ENCODE measurements at regions of chr15 and their contacts with region 1.

Region 1: DNA sequence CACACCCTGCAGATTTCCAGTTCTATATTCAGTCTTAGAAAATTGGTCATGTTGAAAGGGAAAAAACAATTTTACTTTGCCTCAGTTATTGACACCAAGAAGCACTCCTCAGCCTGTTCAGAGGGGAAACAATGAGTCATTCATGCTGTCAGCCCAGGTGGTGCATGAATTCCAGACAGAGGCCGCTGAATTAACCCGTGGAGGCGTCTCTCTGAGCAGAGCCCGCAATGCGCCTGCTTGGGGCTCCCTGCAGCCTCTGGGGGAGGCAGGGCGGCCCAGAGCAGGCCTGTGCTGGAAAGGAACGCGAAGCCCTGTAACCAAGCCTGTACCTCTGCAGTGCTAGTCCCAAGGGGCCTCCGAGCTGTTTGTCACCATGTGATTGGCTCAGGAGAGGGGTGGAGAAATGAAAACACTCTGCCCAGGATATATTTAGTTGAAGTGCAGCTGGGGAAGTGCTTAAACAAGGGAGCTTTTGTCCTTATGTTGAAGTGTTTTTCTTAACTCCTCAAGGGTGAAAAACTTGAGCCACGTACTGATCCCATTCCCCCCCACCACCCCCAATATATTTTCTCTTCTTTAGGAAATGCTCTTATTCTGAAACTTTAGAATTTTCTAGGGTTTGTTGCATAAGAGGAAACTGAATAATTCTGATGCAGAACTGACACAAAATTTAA is 68.3 kb upstream of the CHD2 start:
- DNase-seq: peak; percentile 86
- ATAC-seq: peak; percentile 93
- H3K4me3 Mint-ChIP-seq: peak overlapping the region; percentile 80
- H3K27ac Mint-ChIP-seq: peak overlapping the region; percentile 96
- H3K4me1 Mint-ChIP-seq: peaks cover 58% of the 10 kb centered on the region
- H3K27me3 Mint-ChIP-seq: no peaks in the 10 kb centered on the region
- CTCF ChIP-seq: no peak

Region 2: DNA sequence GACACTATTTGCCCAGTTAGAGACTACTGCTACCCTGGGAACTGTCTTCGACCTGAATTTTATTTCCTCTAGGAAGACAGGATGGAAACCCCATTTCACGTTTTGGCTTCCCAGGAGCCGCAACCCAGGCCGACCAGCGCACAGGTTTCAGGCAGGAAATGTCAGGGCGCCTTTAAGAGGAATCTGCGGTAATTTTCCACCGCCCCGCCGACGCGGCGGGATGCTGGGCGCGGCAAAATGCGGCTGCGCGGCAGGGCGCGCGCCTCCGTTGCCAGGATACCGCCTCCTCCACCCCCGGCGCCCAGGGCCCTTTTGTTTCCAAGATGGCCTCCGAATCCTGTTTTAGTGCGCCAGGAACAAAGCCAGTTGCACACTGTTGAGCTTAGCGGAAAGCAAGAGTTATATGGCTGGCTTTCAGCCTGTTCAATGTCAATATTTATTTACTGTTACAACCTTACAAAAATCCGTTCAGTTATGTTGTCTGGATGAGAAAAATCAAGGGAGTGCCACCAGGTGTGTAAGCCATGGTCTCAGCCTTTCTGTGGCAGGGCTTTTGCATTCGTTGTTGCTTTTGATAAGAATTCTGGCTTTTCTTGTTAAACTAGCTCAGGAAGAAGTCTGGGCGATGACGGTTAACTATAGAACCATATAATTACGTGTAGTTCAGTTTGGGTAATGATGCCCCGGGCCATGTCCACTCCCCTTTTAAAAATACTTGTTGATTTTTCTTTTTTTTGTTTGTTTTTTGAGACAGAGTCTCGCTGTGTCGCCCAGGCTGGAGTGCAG is 11.4 kb before region 1 on chr15:
- CTCF ChIA-PET with region 1: no interaction called
- POLR2A ChIA-PET with region 1: interaction called, 90 read pairs
- intact Hi-C with region 1: loop called (anchors 1 kb)
- DNase-seq: peak; percentile 82
- ATAC-seq: peak; percentile 79
- H3K4me3 Mint-ChIP-seq: peak overlapping the region; percentile 90
- H3K27ac Mint-ChIP-seq: peak overlapping the region; percentile 90
- H3K4me1 Mint-ChIP-seq: peaks cover 62% of the 10 kb centered on the region
- H3K27me3 Mint-ChIP-seq: no peaks in the 10 kb centered on the region
- CTCF ChIP-seq: no peak

Region 3: GRCh38 chr15:92845126-92845508 is 13.3 kb after region 1 on chr15:
- CTCF ChIA-PET with region 1: interaction called, 4 read pairs
- POLR2A ChIA-PET with region 1: interaction called, 102 read pairs
- intact Hi-C with region 1: loop called (anchors 1 kb)
- DNase-seq: no peak
- ATAC-seq: peak; percentile 50
- H3K4me3 Mint-ChIP-seq: peak overlapping the region; percentile 73
- H3K27ac Mint-ChIP-seq: peak overlapping the region; percentile 95
- H3K4me1 Mint-ChIP-seq: peaks cover 71% of the 10 kb centered on the region
- H3K27me3 Mint-ChIP-seq: no peaks in the 10 kb centered on the region
- CTCF ChIP-seq: no peak

Region 4: GRCh38 chr15:92889390-92890107 is 57.8 kb after region 1 on chr15:
- CTCF ChIA-PET with region 1: interaction called, 3 read pairs
- POLR2A ChIA-PET with region 1: interaction called, 416 read pairs
- intact Hi-C with region 1: no loop called
- DNase-seq: no peak
- ATAC-seq: no peak
- H3K4me3 Mint-ChIP-seq: peak overlapping the region; percentile 13
- H3K27ac Mint-ChIP-seq: peak overlapping the region; percentile 59
- H3K4me1 Mint-ChIP-seq: peaks cover 62% of the 10 kb centered on the region
- H3K27me3 Mint-ChIP-seq: no peaks in the 10 kb centered on the region
- CTCF ChIP-seq: no peak

Region 5: DNA sequence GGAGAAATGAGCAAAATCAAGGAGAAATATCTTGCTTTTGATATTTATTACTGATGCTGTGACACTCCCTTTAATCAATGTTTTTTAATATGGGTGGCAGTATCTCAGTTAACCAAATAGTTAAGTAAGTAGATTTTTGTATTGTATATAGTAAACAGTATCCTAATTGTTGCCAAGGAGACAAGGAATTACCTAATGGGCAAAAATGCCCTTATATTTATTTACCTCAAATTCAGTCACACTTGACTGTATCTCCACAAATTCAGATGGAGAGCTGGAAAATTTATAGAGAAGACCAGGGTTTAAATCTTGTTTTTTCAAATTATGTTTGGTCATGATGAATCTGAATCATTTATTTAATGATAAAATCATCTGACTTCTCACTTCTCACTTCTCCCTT is 64.8 kb after region 1 on chr15:
- CTCF ChIA-PET with region 1: interaction called, 4 read pairs
- POLR2A ChIA-PET with region 1: interaction called, 144 read pairs
- intact Hi-C with region 1: loop called (anchors 1 kb)
- DNase-seq: no peak
- ATAC-seq: no peak
- H3K4me3 Mint-ChIP-seq: no peak overlapping the region
- H3K27ac Mint-ChIP-seq: peak overlapping the region; percentile 79
- H3K4me1 Mint-ChIP-seq: peaks cover 51% of the 10 kb centered on the region
- H3K27me3 Mint-ChIP-seq: no peaks in the 10 kb centered on the region
- CTCF ChIP-seq: no peak

Measured in activated B cell treated with CpG ODN at 0.5 μM for 24 hours (primary cell).